Activated naive CD4-positive, alpha-beta T cell treated with anti-CD3 and anti-CD28 coated beads for 36 hours (primary cell): ENCODE measurements at regions of chr3 and their contacts with region 1.

Region 1: GRCh38 chr3:57397175-57398026 is 104.9 kb upstream of the ASB14 start:
- DNase-seq: peak; percentile 77
- H3K4me3 Mint-ChIP-seq: no peak overlapping the region
- H3K27ac Mint-ChIP-seq: peak overlapping the region; percentile 20
- H3K4me1 Mint-ChIP-seq: peaks cover 11% of the 10 kb centered on the region
- H3K27me3 Mint-ChIP-seq: no peaks in the 10 kb centered on the region

Region 2: DNA sequence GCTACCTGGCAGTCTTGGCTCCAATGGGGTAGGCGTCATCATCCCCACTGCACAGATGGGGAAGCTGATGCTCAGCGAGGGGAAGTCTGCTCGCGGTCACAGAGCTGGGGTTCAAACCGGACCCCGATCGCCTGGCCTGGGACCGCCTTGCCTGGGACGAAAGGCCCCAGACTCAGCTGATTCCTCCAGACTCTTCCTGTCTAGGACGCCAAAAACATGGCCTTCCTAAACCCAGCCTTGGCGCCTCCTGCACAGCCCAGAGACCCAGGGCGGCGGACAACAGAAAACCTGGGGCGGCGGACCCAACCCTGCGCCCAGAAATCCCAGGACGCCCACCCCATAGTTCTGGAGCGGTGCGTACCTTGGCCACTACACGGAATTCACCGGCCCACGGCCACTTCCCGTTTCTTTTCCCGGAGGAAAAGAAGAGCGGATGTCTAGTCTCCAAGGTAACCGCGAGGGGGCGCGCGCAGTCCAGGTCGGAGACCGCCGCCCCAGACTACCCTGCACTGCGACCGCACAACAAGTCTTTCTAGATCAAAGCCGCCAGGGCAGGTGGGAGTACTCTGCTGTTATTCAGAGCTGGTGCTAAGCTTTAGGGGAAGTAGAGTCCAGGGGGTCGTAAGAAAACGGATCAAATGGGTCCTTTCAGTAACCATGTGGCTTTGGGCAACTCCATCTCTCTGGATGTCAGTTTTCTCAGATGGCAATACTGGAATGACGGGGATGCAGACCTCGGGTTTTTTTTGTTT is 227.4 kb before region 1 on chr3:
- CTCF ChIA-PET with region 1: interaction called, 20 read pairs
- intact Hi-C with region 1: loop called (anchors 2 kb)
- DNase-seq: peak; percentile 77
- H3K4me3 Mint-ChIP-seq: peak overlapping the region; percentile 60
- H3K27ac Mint-ChIP-seq: no peak overlapping the region
- H3K4me1 Mint-ChIP-seq: peaks cover 2% of the 10 kb centered on the region
- H3K27me3 Mint-ChIP-seq: peaks cover 49% of the 10 kb centered on the region

Region 3: GRCh38 chr3:57555738-57556458 is 158.5 kb after region 1 on chr3 and contains the start of gene PDE12:
- CTCF ChIA-PET with region 1: interaction called, 7 read pairs
- intact Hi-C with region 1: loop called (anchors 2 kb)
- DNase-seq: peak; percentile 89
- H3K4me3 Mint-ChIP-seq: peak within 1 kb of the TSS; percentile 98
- H3K27ac Mint-ChIP-seq: peak within 1 kb of the TSS; percentile 98
- H3K4me1 Mint-ChIP-seq: peaks cover 33% of the 10 kb centered on the region
- H3K27me3 Mint-ChIP-seq: no peaks in the 10 kb centered on the region
- total RNA-seq, gene PDE12: 15.3 to 15.6 TPM

Region 4: GRCh38 chr3:57755668-57756527 is 358.5 kb after region 1 on chr3 and contains the start of gene SLMAP:
- CTCF ChIA-PET with region 1: no interaction called
- intact Hi-C with region 1: loop called (anchors 2 kb)
- DNase-seq: peak; percentile 99
- H3K4me3 Mint-ChIP-seq: peak within 1 kb of the TSS; percentile 98
- H3K27ac Mint-ChIP-seq: peak within 1 kb of the TSS; percentile 92
- H3K4me1 Mint-ChIP-seq: peaks cover 36% of the 10 kb centered on the region
- H3K27me3 Mint-ChIP-seq: no peaks in the 10 kb centered on the region
- total RNA-seq, gene SLMAP: 35.1 TPM

Region 5: DNA sequence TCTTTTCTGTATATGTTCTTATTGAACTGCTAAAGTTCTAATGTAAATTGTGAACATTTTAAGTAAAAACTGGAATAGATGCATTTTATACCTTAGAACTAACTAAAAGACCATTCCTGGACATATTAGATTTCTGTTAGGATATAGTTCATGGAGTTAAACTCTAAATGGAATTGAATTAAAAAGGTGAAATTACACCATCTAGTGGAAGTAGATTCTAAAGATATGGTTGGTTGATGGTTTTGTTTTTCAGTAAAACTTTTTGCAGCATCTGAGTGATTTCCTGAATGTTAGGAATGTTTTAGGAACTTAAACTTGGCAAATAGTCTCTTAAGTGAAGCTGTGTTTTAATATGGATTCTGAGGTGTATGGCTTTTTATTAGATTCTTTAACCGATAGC is 455.5 kb after region 1 on chr3:
- CTCF ChIA-PET with region 1: interaction called, 10 read pairs
- intact Hi-C with region 1: loop called (anchors 1 kb)
- DNase-seq: no peak
- H3K4me3 Mint-ChIP-seq: no peak overlapping the region
- H3K27ac Mint-ChIP-seq: no peak overlapping the region
- H3K4me1 Mint-ChIP-seq: no peaks in the 10 kb centered on the region
- H3K27me3 Mint-ChIP-seq: no peaks in the 10 kb centered on the region

Region 6: DNA sequence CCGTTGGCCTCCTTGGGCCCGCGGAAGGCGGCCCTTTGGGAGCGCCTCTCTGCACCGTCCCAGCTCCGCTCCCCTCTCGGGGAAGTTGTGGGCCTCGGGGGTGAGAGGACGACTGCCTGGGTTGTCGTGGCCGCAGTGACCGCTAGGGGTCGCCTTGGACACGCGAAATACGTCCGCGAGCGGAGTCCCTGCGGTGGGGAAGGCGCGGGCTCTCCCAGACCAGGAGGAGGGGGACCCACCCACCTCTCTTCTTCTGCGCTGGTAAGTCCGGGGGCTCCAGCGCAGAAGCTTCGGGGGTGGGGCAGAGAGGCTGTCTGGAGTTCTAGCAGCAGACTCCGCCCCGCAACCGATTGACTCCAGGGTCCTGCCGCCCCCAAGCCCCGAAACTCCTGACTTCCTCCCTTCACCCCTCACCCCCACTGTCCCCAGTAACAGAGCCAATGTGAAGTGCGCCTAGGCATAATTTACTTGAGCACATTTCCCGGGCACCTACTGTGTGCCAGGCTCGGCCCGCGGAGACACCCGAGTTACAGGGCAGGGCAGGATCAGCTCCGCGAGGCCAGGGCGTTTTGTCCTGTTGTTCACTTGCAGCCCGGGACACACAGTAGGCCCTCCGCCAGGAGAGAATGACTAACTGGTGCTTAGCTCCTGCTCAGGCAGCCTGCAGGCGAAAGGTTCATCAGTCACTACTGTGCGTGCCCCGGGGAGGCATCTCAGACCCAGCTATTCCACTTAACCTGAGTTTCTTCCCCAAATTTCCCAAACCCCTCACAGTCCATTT is 780.5 kb after region 1 on chr3:
- CTCF ChIA-PET with region 1: no interaction called
- intact Hi-C with region 1: loop called (anchors 10 kb)
- DNase-seq: peak; percentile 95
- H3K4me3 Mint-ChIP-seq: peak overlapping the region; percentile 59
- H3K27ac Mint-ChIP-seq: no peak overlapping the region
- H3K4me1 Mint-ChIP-seq: peaks cover 13% of the 10 kb centered on the region
- H3K27me3 Mint-ChIP-seq: peaks cover 6% of the 10 kb centered on the region